Activated CD4-positive, alpha-beta T cell treated with anti-CD3 and anti-CD28 coated beads for 36 hours (primary cell): ENCODE measurements at regions of chr1 and their contacts with region 1.

Region 1: DNA sequence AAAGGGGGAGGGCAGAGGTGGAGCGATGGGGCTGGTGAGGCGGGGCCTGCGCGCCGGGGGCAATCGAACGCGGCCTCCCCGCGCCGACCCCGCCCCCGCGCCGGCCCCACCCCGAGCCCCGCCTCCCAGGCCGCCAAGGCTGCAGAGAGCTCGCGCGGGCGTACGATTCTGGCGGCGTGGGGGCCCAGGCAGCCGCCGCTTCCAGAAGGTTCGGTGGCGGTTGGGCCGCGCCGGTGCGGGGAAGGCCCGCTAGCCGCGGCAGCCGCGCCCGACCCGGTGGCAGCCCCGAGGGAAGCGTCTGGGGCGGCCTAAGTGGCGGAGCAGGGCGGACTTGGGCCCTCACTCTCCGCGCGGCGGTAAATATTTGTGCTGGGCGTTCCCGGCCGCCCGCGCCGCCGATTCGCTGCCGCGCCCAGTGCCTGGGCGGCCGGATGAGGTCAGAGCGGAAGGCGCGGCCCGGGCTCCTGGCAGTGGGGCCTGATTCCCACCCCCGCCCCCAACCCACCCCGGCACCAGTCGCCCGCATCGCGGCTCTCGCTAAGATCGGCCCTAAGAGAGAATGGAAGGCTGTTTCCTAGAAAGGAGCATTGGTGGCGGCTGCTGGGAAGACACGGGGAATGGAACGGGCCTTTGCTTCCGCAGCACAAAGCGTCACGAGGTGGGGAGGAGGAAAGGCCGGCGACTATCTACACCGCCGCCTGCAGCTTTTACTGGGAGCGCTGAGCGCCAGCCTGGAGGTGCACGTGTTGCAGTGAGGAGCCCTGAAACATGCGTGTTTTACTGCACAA is at the start of gene ACOT7:
- DNase-seq: peak; percentile 97
- ATAC-seq: peak; percentile 91
- H3K4me3 Mint-ChIP-seq: peak within 1 kb of the TSS; percentile 83
- H3K27ac Mint-ChIP-seq: peak within 1 kb of the TSS; percentile 95
- H3K4me1 Mint-ChIP-seq: peaks cover 28% of the 10 kb centered on the region
- H3K27me3 Mint-ChIP-seq: no peaks in the 10 kb centered on the region
- total RNA-seq, gene ACOT7: 93.8 to 99.2 TPM

Region 2: DNA sequence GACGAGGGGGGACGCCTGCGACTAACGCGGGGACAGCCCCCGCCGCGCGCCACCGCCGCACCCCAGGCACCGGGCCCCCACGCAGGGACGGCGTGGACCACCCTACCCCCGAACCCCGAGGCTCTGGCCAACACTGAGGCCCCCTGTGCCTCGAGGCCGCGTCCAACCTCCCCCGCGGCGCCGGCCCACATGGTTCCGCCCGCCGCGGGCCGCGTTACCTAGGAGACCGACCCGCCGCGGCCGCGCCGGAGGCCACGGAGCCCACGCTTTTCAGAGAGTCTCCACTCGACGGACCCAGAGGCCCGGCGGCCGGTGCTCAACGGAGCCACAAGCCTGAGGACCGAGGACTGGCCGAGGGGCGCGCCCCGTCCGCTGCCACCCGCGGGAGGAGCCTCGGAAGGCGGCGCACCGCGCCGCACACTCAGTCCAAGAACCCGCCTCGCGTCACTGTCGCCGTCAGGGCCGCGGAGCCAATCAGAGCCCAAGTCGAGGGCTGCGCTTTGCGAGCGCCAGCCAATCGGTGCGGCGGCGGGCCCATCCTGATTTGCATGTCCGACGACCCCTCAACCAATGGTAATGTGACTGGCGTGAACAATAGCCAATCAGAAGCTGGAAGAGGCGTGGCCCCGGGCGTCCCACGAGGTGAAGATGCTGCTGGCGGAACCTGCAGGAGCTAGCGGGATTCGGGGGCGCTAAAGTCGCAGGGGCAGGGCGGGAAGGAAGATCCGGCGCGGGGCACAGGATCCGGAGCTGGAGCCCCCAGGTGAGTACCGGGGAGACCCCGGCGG is 401.4 kb before region 1 on chr1 and contains the start of gene NPHP4:
- CTCF ChIA-PET with region 1: no interaction called
- POLR2A ChIA-PET with region 1: no interaction called
- intact Hi-C with region 1: loop called in 1 of 2 experiments (anchors 1 kb)
- DNase-seq: peak; percentile 100
- ATAC-seq: peak; percentile 93
- H3K4me3 Mint-ChIP-seq: peak within 1 kb of the TSS; percentile 97
- H3K27ac Mint-ChIP-seq: peak within 1 kb of the TSS; percentile 96
- H3K4me1 Mint-ChIP-seq: peaks cover 25% of the 10 kb centered on the region
- H3K27me3 Mint-ChIP-seq: no peaks in the 10 kb centered on the region
- total RNA-seq, gene NPHP4: 12.9 to 14.1 TPM

Region 3: GRCh38 chr1:6235296-6235677 is 158.3 kb before region 1 on chr1:
- CTCF ChIA-PET with region 1: no interaction called
- POLR2A ChIA-PET with region 1: no interaction called
- intact Hi-C with region 1: loop called in 1 of 2 experiments (anchors 1 kb)
- DNase-seq: no peak
- ATAC-seq: peak; percentile 7
- H3K4me3 Mint-ChIP-seq: peak overlapping the region; percentile 88
- H3K27ac Mint-ChIP-seq: peak overlapping the region; percentile 78
- H3K4me1 Mint-ChIP-seq: peaks cover 12% of the 10 kb centered on the region
- H3K27me3 Mint-ChIP-seq: peaks cover 11% of the 10 kb centered on the region

Region 4: DNA sequence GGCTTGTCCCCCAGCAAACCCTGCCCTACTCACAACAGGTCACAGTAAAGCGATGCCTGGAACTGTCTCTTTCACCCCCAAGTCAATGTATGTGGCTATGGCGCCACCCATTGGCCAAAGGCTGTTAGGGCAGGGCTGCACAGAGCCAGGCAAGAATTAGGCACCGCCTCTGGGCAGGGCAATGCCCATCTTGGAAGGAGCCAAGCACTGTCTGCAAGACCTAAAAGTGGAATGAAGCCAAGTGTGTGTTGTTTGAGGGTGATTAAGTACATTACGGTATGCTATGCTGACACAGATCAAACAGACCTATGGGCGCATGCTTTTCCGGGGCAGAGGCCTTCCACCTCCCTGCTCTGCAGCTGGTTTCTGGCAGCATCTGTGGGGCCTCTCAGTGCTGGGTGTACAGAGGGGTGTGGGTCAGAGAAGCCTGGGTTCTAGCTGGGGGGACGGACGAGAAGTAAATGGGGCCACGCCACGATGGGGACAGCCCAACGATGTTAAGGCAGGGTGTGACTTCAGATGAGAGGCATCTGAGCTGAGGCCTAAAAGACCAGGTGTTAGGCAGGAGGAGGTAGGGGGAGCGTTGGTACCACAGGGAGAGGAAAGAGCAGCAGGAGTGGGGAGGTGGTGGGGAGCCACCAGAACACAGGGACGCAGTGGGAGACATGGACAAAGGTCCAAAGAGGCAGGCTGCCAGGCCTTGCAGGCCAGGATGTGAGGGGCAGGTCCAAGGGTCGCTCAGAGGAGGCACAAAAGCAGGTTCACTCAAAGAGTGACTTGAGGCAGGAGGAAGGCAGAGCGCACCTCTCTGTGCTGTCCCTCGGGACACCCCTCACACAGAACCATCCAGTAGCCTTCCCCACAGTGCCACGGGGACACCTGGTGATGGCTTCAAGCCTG is 49.8 kb before region 1 on chr1:
- CTCF ChIA-PET with region 1: interaction called, 9 read pairs
- POLR2A ChIA-PET with region 1: no interaction called
- intact Hi-C with region 1: loop called (anchors 1 to 2 kb)
- DNase-seq: peak; percentile 83
- ATAC-seq: peak; percentile 83
- H3K4me3 Mint-ChIP-seq: no peak overlapping the region
- H3K27ac Mint-ChIP-seq: no peak overlapping the region
- H3K4me1 Mint-ChIP-seq: peaks cover 10% of the 10 kb centered on the region
- H3K27me3 Mint-ChIP-seq: no peaks in the 10 kb centered on the region

Region 5: GRCh38 chr1:6438047-6438525 is 44.5 kb after region 1 on chr1:
- CTCF ChIA-PET with region 1: interaction called, 3 read pairs
- POLR2A ChIA-PET with region 1: no interaction called
- intact Hi-C with region 1: loop called in 1 of 2 experiments (anchors 1 kb)
- DNase-seq: peak; percentile 85
- ATAC-seq: peak; percentile 72
- H3K4me3 Mint-ChIP-seq: no peak overlapping the region
- H3K27ac Mint-ChIP-seq: no peak overlapping the region
- H3K4me1 Mint-ChIP-seq: peaks cover 2% of the 10 kb centered on the region
- H3K27me3 Mint-ChIP-seq: peaks cover 16% of the 10 kb centered on the region

Region 6: GRCh38 chr1:6579374-6580118 is 186.0 kb after region 1 on chr1 and contains the start of gene ZBTB48:
- CTCF ChIA-PET with region 1: no interaction called
- POLR2A ChIA-PET with region 1: no interaction called
- intact Hi-C with region 1: loop called in 1 of 2 experiments (anchors 1 kb)
- DNase-seq: peak; percentile 99
- ATAC-seq: peak; percentile 99
- H3K4me3 Mint-ChIP-seq: peak within 1 kb of the TSS; percentile 92
- H3K27ac Mint-ChIP-seq: peak within 1 kb of the TSS; percentile 89
- H3K4me1 Mint-ChIP-seq: peaks cover 30% of the 10 kb centered on the region
- H3K27me3 Mint-ChIP-seq: no peaks in the 10 kb centered on the region
- total RNA-seq, gene ZBTB48: 23.2 to 26.0 TPM